CD14-positive monocyte (primary cell): ENCODE measurements at regions of chr2 and their contacts with region 1.

Region 1: GRCh38 chr2:57443973-57444521 is 602.6 kb upstream of the VRK2 start:
- DNase-seq: peak; percentile 75 to 98 (median 81)
- H3K4me3 ChIP-seq: no peak overlapping the region
- H3K4me3 Mint-ChIP-seq: peak overlapping the region in 1 of 2 donors; percentile 48
- H3K27ac ChIP-seq: peak overlapping the region in 1 of 2 donors; percentile 20
- H3K27ac Mint-ChIP-seq: peak overlapping the region; percentile 6 to 91 (median 38)
- H3K4me1 ChIP-seq: peaks cover 19 to 20% of the 10 kb centered on the region in 2 donors
- H3K4me1 Mint-ChIP-seq: peaks cover 22% of the 10 kb centered on the region
- H3K27me3 ChIP-seq: no peaks in the 10 kb centered on the region
- H3K27me3 Mint-ChIP-seq: no peaks in the 10 kb centered on the region
- CTCF ChIP-seq: no peak

Region 2: DNA sequence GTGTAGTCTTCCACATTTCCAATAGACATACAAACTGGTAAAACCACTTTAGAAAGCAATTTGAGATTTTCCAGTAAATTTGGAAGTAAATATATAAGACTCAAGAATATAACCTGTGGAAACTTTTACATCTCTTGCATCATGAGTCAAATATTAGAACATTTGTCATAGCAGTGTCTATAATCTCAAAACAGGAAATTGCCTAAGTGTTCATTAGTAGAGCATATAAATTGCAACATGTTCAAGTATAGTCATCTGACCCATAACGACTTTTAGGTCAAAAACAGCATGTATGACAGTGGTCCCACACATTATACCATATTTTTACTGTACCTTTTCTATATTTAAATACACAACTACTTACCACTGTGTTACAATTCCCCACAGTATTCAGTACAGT is 46.7 kb after region 1 on chr2:
- intact Hi-C with region 1: loop called in 1 of 2 experiments (anchors 5 kb)
- DNase-seq: peak; percentile 25 to 73 (median 68)
- H3K4me3 ChIP-seq: no peak overlapping the region
- H3K4me3 Mint-ChIP-seq: no peak overlapping the region
- H3K27ac ChIP-seq: peak overlapping the region in 1 of 2 donors; percentile 47
- H3K27ac Mint-ChIP-seq: peak overlapping the region in 1 of 7 donors; percentile 68
- H3K4me1 ChIP-seq: peaks cover 0 to 8% of the 10 kb centered on the region in 2 donors
- H3K4me1 Mint-ChIP-seq: peaks cover 12% of the 10 kb centered on the region
- H3K27me3 ChIP-seq: no peaks in the 10 kb centered on the region
- H3K27me3 Mint-ChIP-seq: no peaks in the 10 kb centered on the region
- CTCF ChIP-seq: no peak

Region 3: DNA sequence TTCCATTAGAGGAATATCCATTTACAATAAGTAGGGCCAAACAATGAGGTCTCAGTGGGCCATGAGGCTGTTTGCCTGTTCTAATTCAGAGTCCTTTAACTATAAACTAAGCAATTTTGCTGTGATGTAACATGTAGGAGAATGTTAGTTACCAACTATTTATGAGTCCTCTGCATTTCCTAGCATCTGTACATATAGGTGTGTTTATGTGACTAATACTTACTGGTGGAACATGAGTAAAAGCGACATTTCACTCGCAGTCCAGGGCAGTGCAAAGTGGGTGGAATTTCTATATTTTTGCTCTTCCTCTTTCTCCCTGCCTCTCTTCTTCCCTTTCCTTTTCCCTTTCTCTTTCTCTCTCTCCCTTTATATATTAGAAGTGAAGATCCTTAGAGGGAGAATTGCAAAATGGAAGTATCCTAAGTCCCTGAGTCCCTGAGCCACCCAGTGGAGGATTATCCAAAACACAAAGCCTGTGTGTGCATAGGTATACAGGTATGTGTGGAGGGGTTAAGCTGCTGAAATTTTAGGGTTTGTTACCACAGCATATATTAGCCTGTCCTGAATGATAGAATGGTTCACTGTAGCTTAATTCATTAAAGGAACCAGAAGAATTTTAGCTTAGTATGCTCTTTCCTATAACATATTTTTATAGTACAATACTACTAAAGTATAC is 1284.1 kb after region 1 on chr2:
- intact Hi-C with region 1: no loop called
- DNase-seq: no peak
- H3K4me3 ChIP-seq: no peak overlapping the region
- H3K4me3 Mint-ChIP-seq: no peak overlapping the region
- H3K27ac ChIP-seq: no peak overlapping the region
- H3K27ac Mint-ChIP-seq: no peak overlapping the region
- H3K4me1 ChIP-seq: peaks cover 0 to 3% of the 10 kb centered on the region in 2 donors
- H3K4me1 Mint-ChIP-seq: peaks cover 18% of the 10 kb centered on the region
- H3K27me3 ChIP-seq: no peaks in the 10 kb centered on the region
- H3K27me3 Mint-ChIP-seq: peaks cover 0 to 1% (median 0%) of the 10 kb centered on the region in 3 donors
- CTCF ChIP-seq: no peak